ENCODE measurements at regions of chr12 and their contacts with region 1.

Region 1: DNA sequence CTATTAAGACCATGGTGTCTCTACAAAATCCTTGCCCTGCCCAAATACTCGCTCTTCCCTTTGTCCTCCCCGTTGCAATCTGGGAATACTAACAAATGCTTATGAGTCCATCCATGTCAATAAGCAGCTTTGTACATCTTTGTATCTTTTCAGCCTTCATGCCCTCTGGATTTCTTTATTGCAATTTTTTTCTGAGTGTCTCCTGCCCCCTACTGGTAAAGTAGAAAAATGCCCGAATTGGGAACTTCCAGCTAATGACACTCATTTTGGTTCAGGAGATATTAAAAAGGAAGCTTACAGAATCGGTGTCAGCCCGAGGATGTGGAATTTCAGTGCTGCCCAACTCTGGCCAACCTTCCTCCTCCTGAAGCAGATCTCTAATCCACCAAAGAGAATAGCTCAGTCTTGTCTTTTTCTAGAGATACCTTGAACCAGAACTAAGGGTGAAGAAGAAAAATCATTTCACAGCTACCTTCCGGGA is 46.0 kb downstream of the SH2B3 start:
- DNase-seq: no peak
- ATAC-seq: peak; percentile 73
- H3K4me3 ChIP-seq: no peak overlapping the region
- H3K27ac ChIP-seq: no peak overlapping the region
- H3K4me1 ChIP-seq: peaks cover 37% of the 10 kb centered on the region
- H3K27me3 ChIP-seq: no peaks in the 10 kb centered on the region
- CTCF ChIP-seq: peak; percentile 61 to 81 (median 73)
- EP300 ChIP-seq: no peak
- POLR2A ChIP-seq: 0 out of 2 replicates have a peak, but pooled peaks have one; percentile 25
- RAD21 ChIP-seq: peak; percentile 92

Region 2: DNA sequence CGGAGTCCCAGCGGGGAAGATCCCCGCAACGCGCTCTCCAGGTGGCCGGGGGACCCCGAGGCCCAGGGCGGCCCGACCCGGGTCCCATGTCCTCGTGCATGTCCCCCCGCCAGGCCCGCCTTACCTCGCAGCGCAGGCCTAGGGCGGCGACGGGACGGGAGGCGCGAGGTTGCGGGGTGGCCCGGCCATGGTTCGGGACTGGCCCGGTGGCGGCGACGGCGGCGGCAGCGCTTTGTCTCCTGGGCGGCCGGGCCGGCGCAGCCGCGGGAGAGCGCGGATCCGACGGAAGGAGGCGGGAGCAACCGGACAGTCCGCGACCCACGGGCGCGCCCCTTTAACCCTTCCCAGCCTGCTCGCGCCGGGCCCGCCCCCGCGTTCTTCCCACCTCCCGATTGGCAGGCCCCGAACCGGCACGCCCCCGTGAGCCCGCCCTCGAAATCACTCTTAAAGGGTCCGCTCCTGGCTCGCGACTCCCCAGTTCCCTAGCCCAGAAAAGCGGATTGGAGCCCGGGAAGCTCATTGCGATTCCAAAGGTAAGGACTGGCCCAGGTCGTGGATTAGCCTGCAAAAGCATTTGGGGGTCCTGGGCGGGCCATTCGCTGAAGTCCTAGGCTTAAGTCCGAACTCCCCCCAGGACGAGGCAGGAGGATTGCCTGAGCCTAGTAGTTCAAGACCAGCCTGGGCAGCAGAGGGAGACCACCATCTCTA is 82.7 kb before region 1 on chr12 and contains the start of gene PHETA1:
- CTCF ChIA-PET with region 1: interaction called, 13 read pairs
- POLR2A ChIA-PET with region 1: interaction called, 3 read pairs
- RAD21 ChIA-PET with region 1: interaction called, 6 read pairs
- SMC1A ChIA-PET with region 1: interaction called, 5 read pairs
- in situ Hi-C with region 1: no loop called
- intact Hi-C with region 1: no loop called
- DNase-seq: peak; percentile 30
- ATAC-seq: peak; percentile 99
- H3K4me3 ChIP-seq: peak within 1 kb of the TSS; percentile 68
- H3K27ac ChIP-seq: no peak within 1 kb of the TSS
- H3K4me1 ChIP-seq: peaks cover 2% of the 10 kb centered on the region; the same call in 1 of the 2 replicates
- H3K27me3 ChIP-seq: no peaks in the 10 kb centered on the region
- CTCF ChIP-seq: no peak
- EP300 ChIP-seq: no peak
- POLR2A ChIP-seq: no peak
- RAD21 ChIP-seq: no peak
- polyA plus RNA-seq, gene PHETA1: 0.02 TPM in 1 of 2 experiments, not detected in the other

Region 3: GRCh38 chr12:111428728-111429175 is 22.9 kb before region 1 on chr12:
- CTCF ChIA-PET with region 1: interaction called, 160 read pairs
- POLR2A ChIA-PET with region 1: interaction called, 80 read pairs
- RAD21 ChIA-PET with region 1: interaction called, 43 read pairs
- SMC1A ChIA-PET with region 1: interaction called, 86 read pairs
- in situ Hi-C with region 1: no loop called
- intact Hi-C with region 1: no loop called
- DNase-seq: no peak
- ATAC-seq: peak; percentile 11
- H3K4me3 ChIP-seq: peak overlapping the region; percentile 52
- H3K27ac ChIP-seq: peak overlapping the region; percentile 95
- H3K4me1 ChIP-seq: peaks cover 79% of the 10 kb centered on the region
- H3K27me3 ChIP-seq: no peaks in the 10 kb centered on the region
- CTCF ChIP-seq: no peak
- EP300 ChIP-seq: no peak
- POLR2A ChIP-seq: peak; percentile 52
- RAD21 ChIP-seq: no peak

Region 4: GRCh38 chr12:111462210-111462769 is 10.6 kb after region 1 on chr12:
- CTCF ChIA-PET with region 1: interaction called, 56 read pairs
- POLR2A ChIA-PET with region 1: no interaction called
- RAD21 ChIA-PET with region 1: interaction called, 14 read pairs
- SMC1A ChIA-PET with region 1: interaction called, 49 read pairs
- in situ Hi-C with region 1: no loop called
- intact Hi-C with region 1: no loop called
- DNase-seq: no peak
- ATAC-seq: peak; percentile 80
- H3K4me3 ChIP-seq: no peak overlapping the region
- H3K27ac ChIP-seq: no peak overlapping the region
- H3K4me1 ChIP-seq: no peaks in the 10 kb centered on the region
- H3K27me3 ChIP-seq: no peaks in the 10 kb centered on the region
- CTCF ChIP-seq: no peak
- EP300 ChIP-seq: no peak
- POLR2A ChIP-seq: no peak
- RAD21 ChIP-seq: no peak

Region 5: GRCh38 chr12:111529424-111530368 is 78.0 kb after region 1 on chr12:
- CTCF ChIA-PET with region 1: interaction called, 30 read pairs
- POLR2A ChIA-PET with region 1: interaction called, 4 read pairs
- RAD21 ChIA-PET with region 1: interaction called, 13 read pairs
- SMC1A ChIA-PET with region 1: interaction called, 22 read pairs
- in situ Hi-C with region 1: no loop called
- intact Hi-C with region 1: no loop called
- DNase-seq: peak; percentile 24
- ATAC-seq: peak; percentile 95
- H3K4me3 ChIP-seq: no peak overlapping the region
- H3K27ac ChIP-seq: no peak overlapping the region
- H3K4me1 ChIP-seq: no peaks in the 10 kb centered on the region
- H3K27me3 ChIP-seq: no peaks in the 10 kb centered on the region
- CTCF ChIP-seq: peak; percentile 63 to 71 (median 64)
- EP300 ChIP-seq: no peak
- POLR2A ChIP-seq: no peak
- RAD21 ChIP-seq: peak; percentile 70

Measured in GM12878 (cell line).